CD8-positive, alpha-beta memory T cell (primary cell): ENCODE measurements at regions of chr2 and their contacts with region 1.

Region 1: DNA sequence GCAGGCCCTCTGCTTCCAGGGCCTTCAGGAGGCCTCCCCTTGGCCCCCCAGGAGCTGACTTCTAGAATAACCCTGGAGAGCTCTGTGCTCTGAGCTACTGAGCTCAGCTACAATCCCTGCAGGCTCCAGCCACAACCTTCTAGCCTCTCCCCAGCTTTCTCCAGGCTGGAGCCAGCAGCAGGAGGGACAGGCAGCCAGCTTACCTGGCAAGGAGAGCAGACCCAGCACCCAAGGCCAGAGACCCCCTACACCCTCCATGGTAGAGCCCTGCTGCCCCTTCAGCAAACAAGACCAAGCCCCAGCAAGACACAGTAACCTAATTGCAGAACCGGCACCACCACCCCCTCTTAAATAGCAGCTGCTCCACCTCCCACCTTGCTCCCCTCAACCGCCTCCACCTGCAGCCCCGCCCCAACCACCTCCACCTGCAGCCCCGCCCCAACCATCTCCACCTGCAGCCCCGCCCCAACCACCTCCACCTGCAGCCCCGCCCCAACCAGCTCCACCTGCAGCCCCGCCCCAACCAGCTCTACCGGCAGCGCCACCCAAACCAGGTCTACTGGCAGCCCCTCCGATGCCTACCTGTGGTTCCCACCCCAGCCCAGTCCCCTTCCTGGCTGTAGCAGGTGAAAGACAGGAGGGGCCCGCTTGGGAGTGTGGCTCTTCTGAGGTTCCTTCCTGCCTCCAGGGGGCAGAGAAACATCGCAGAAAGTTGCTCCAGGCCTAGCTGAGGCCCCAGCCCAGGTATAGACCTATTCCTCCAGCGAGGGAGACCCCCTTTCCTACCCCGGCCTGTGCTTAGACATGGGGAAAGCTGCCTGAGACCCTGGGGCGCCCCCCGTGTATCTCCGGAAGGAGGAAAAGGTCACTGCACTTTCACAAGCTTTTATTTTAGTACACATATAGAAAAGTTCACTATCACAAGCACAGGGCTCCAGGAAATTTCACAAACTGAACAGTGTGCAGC is at the start of gene ASTL:
- DNase-seq: peak; percentile 46 to 77 (median 67)
- H3K4me3 ChIP-seq: no peak within 1 kb of the TSS
- H3K4me3 Mint-ChIP-seq: peak within 1 kb of the TSS in 4 of 7 donors; percentile 17 to 61 (median 38)
- H3K27ac ChIP-seq: no peak within 1 kb of the TSS
- H3K27ac Mint-ChIP-seq: peak within 1 kb of the TSS; percentile 23 to 100 (median 88)
- H3K4me1 ChIP-seq: peaks cover 32% of the 10 kb centered on the region
- H3K4me1 Mint-ChIP-seq: peaks cover 30 to 68% (median 41%) of the 10 kb centered on the region in 3 donors
- H3K27me3 ChIP-seq: no peaks in the 10 kb centered on the region
- H3K27me3 Mint-ChIP-seq: peaks cover 0 to 3% of the 10 kb centered on the region in 2 donors
- total RNA-seq, gene ASTL: 16.2 to 18.0 TPM

Region 2: DNA sequence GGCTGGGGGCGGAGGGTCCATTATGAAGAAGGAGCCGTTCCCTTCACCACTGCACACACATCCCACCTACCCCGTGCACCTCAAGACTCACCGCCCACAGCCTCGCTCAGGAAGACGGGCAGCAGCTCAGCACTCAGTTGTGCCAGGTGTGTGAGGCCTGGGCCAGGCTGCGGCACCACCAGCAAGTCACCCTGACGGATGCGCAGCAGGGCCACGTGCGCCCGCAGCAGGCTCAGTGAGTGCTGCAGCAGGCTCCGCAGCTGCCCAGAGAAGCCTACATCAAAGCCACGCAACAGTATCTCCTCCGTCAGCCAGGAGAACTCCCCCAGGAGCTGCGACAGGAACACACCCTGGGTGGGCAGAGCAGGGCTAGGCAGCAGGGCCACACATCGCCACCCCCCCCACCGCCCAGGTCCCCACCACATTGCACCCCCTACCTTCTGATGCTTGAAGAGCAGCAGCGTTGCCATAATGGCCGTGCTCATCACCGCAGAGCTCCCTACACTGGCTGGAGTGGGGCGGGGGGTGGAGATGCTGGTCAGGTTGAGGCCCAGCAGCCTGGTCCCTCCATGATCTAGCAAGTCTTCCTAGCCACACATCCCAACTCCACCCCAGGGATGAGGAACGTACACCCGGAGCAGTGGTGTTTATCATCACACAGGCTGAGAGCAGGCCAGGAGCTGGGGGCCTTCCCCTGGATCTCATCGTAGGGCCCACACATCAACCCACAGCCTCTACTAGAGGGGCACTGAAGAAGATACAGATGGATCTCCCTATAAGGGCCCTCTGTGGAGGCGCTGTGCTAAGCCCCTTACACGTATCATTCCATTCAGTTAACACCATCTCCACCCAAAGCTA is 113.9 kb before region 1 on chr2:
- CTCF ChIA-PET with region 1: interaction called, 13 read pairs
- POLR2A ChIA-PET with region 1: no interaction called
- DNase-seq: no peak
- H3K4me3 ChIP-seq: no peak overlapping the region
- H3K4me3 Mint-ChIP-seq: no peak overlapping the region
- H3K27ac ChIP-seq: no peak overlapping the region
- H3K27ac Mint-ChIP-seq: no peak overlapping the region
- H3K4me1 ChIP-seq: no peaks in the 10 kb centered on the region
- H3K4me1 Mint-ChIP-seq: peaks cover 2 to 3% (median 3%) of the 10 kb centered on the region in 3 donors
- H3K27me3 ChIP-seq: no peaks in the 10 kb centered on the region
- H3K27me3 Mint-ChIP-seq: no peaks in the 10 kb centered on the region

Region 3: GRCh38 chr2:96091533-96092334 is 46.7 kb before region 1 on chr2:
- CTCF ChIA-PET with region 1: no interaction called
- POLR2A ChIA-PET with region 1: no interaction called
- DNase-seq: no peak
- H3K4me3 ChIP-seq: no peak overlapping the region
- H3K4me3 Mint-ChIP-seq: no peak overlapping the region
- H3K27ac ChIP-seq: no peak overlapping the region
- H3K27ac Mint-ChIP-seq: peak overlapping the region in 1 of 8 donors; percentile 33
- H3K4me1 ChIP-seq: no peaks in the 10 kb centered on the region
- H3K4me1 Mint-ChIP-seq: no peaks in the 10 kb centered on the region
- H3K27me3 ChIP-seq: no peaks in the 10 kb centered on the region
- H3K27me3 Mint-ChIP-seq: peaks cover 6 to 18% of the 10 kb centered on the region in 2 donors

Region 4: DNA sequence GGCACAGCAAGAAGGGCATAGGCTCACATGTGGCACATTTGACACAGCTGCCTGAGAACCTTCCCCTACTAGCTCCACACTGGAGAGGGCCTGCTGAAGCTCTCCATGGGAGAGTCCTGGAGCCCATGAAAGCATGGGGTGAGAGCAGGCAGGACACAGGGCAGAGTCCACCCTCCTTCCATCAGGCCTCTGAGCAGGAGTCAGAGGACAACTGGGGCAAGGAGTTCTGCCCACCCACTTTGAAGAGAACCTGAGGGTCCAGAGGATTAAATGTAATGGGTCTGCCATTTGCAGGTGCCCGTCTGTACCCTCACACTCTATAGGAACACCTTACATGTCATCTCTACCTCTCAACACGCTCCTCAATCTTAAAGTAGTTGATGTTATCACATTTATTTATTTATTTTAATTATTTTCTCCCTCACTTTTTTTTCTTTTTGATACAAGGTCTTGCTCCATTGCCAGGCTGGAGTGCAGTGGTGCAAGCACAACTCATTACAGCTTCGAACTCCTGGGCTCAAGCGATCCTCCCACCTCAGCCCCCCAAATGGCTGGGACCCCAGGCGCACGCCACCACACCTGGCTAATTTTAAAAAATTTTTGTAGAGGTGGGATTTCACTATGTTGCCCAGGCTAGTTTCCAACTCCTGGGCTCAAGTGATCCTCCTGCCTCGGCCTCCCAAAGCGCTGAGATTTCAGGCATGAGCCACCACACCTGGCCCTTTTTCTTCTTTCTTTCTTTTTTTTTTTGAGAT is 32.3 kb before region 1 on chr2:
- CTCF ChIA-PET with region 1: no interaction called
- POLR2A ChIA-PET with region 1: no interaction called
- DNase-seq: no peak
- H3K4me3 ChIP-seq: no peak overlapping the region
- H3K4me3 Mint-ChIP-seq: no peak overlapping the region
- H3K27ac ChIP-seq: no peak overlapping the region
- H3K27ac Mint-ChIP-seq: no peak overlapping the region
- H3K4me1 ChIP-seq: no peaks in the 10 kb centered on the region
- H3K4me1 Mint-ChIP-seq: no peaks in the 10 kb centered on the region
- H3K27me3 ChIP-seq: no peaks in the 10 kb centered on the region
- H3K27me3 Mint-ChIP-seq: peaks cover 0 to 4% of the 10 kb centered on the region in 2 donors

Region 5: DNA sequence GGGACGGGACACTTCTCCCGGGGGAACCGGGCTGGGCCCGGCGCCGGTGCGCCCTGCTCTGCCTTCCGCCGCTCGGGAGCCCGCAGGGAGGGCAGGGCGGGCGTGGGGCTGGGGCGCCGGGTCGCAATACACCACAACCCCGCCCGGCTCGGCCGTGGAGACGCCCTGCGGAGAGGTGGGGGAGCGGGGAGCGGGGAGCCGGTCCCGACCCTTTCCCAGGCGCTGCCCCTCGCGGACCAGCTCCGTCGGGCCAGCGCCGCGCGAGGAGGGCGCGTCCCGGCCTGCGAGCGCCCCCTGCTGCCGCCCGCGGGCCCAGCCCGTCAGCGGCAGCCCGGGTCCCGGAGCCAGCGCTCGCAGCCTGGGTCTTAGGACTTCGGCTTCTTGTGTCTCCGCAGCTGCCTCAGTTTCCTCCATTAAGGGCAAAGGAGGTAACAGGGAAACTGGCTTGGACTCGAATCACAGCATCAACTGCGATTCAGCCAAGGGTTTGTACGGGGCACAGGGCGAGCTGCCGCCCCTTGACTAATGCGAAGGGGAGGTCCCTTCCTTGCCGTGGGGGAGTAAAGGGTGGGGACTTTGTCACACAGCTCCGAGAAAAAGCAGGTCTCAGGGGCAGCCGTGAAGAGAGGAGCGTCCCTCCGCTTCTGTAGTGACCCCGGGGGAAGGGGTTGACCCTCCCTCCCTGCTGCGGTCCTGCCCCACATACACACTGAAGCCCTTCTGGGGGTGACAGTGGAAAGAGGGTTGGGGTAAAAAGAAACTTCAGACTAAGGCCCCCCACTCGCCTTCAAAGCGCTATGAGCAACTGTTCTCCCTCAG is 21.4 kb before region 1 on chr2:
- CTCF ChIA-PET with region 1: interaction called, 29 read pairs
- POLR2A ChIA-PET with region 1: interaction called, 5 read pairs
- DNase-seq: peak; percentile 48 to 72 (median 63)
- H3K4me3 ChIP-seq: peak overlapping the region; percentile 29
- H3K4me3 Mint-ChIP-seq: peak overlapping the region; percentile 47 to 87 (median 75)
- H3K27ac ChIP-seq: no peak overlapping the region
- H3K27ac Mint-ChIP-seq: peak overlapping the region in 4 of 8 donors; percentile 27 to 47 (median 30)
- H3K4me1 ChIP-seq: peaks cover 7% of the 10 kb centered on the region
- H3K4me1 Mint-ChIP-seq: peaks cover 9 to 35% (median 11%) of the 10 kb centered on the region in 3 donors
- H3K27me3 ChIP-seq: no peaks in the 10 kb centered on the region
- H3K27me3 Mint-ChIP-seq: peaks cover 19% of the 10 kb centered on the region in 2 donors

Region 6: DNA sequence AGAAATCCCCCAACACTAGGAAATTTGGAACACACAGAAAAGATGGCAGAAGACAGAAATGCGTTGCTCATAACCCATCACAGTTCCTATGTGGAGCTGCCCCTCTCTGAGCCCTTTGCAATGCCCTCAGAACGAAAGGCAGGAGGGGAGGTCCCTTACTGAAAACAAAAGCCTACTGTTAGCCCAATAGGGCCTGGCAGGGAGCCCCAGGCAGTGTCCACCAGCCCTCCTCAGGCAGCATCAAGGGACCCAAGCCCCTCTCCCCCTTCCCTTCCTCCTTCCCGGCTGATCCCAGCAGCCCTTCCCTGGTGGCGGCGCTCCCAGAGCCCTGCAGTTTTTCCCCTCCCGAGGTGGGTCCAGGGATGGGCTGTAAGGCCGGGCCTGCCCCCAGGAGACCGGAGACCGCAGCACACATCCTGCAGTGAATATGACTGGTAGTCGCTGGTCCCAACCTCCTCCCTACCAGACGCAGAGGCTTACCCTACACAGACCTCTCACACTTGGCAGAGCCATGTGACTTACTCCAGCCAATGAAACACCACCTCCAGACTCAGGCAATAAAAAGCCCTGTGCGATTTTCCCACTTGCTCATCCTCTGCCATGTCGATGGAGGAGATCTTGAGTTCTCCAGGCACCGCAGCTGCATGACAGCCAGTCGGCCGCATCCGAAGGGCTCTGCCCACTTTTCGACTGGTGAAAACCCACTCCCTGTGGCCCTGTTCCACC is 26.2 kb after region 1 on chr2:
- CTCF ChIA-PET with region 1: interaction called, 385 read pairs
- POLR2A ChIA-PET with region 1: interaction called, 78 read pairs
- DNase-seq: peak; percentile 51 to 85 (median 68)
- H3K4me3 ChIP-seq: peak overlapping the region; percentile 54
- H3K4me3 Mint-ChIP-seq: peak overlapping the region; percentile 79 to 94 (median 84)
- H3K27ac ChIP-seq: peak overlapping the region; percentile 80
- H3K27ac Mint-ChIP-seq: peak overlapping the region; percentile 88 to 100 (median 92)
- H3K4me1 ChIP-seq: peaks cover 54% of the 10 kb centered on the region
- H3K4me1 Mint-ChIP-seq: peaks cover 58 to 80% (median 67%) of the 10 kb centered on the region in 3 donors
- H3K27me3 ChIP-seq: no peaks in the 10 kb centered on the region
- H3K27me3 Mint-ChIP-seq: no peaks in the 10 kb centered on the region

Region 7: GRCh38 chr2:96181529-96181928 is 43.1 kb after region 1 on chr2:
- CTCF ChIA-PET with region 1: interaction called, 385 read pairs
- POLR2A ChIA-PET with region 1: no interaction called
- DNase-seq: no peak
- H3K4me3 ChIP-seq: no peak overlapping the region
- H3K4me3 Mint-ChIP-seq: no peak overlapping the region
- H3K27ac ChIP-seq: no peak overlapping the region
- H3K27ac Mint-ChIP-seq: peak overlapping the region in 3 of 8 donors; percentile 14 to 80 (median 75)
- H3K4me1 ChIP-seq: peaks cover 9% of the 10 kb centered on the region
- H3K4me1 Mint-ChIP-seq: peaks cover 13 to 16% (median 14%) of the 10 kb centered on the region in 3 donors
- H3K27me3 ChIP-seq: no peaks in the 10 kb centered on the region
- H3K27me3 Mint-ChIP-seq: no peaks in the 10 kb centered on the region

Region 8: GRCh38 chr2:96214554-96214953 is 76.1 kb after region 1 on chr2:
- CTCF ChIA-PET with region 1: no interaction called
- POLR2A ChIA-PET with region 1: no interaction called
- DNase-seq: no peak
- H3K4me3 ChIP-seq: no peak overlapping the region
- H3K4me3 Mint-ChIP-seq: no peak overlapping the region
- H3K27ac ChIP-seq: no peak overlapping the region
- H3K27ac Mint-ChIP-seq: no peak overlapping the region
- H3K4me1 ChIP-seq: peaks cover 6% of the 10 kb centered on the region
- H3K4me1 Mint-ChIP-seq: peaks cover 2 to 5% (median 3%) of the 10 kb centered on the region in 3 donors
- H3K27me3 ChIP-seq: no peaks in the 10 kb centered on the region
- H3K27me3 Mint-ChIP-seq: no peaks in the 10 kb centered on the region